Right cardiac atrium (tissue), 5 donors: ENCODE measurements at regions of chrX and their contacts with region 1.

Region 1: DNA sequence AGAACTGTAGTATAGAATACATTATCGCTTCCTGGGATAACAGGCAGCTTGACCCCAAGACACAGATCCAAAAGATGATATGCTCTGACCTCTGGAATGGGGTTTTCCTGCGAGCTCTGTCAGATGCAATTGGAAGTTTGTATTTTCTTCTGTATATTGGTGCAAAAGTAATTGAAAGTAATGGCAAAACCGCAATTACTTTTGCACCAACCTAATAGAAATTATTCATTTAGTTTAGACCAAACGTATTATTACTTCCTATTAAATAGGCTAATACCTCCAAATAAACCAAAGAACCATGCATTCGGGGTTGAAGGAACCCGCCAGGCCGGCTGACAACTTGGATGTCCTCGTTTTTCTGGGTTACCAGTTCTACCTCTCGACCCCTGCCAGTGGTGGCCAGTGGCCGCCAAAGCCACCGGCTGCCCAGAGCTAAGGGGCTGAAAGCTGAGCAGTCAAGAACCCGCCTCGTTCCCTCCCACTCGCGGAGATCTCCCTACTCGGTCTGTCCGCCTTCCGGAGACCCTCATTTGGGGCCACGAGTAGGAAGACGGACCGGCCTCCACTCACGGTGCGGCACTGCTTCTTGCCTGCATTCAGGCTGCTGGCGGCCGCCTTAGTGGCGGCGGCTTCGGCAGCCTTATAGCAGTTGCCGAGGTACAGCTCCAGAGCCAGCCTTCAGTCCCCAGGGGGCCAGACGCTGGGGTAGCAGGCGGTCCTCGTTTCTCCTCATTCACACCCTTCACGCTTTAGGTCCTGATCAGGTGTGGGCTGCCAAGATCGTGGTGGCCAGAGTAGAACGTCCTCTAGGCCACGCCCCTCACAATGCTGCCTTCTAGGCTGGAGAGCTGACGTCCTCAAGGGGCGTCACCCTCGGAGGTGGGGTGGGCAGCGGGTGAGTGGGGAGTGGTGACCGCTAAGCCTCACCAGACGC is 121.9 kb downstream of the RBMX2 start:
- DNase-seq: peak; percentile 51 to 79 (median 63)
- ATAC-seq: peak; percentile 81 to 82
- H3K4me3 ChIP-seq: peak overlapping the region; percentile 40
- H3K27ac ChIP-seq: no peak overlapping the region
- H3K4me1 ChIP-seq: no peaks in the 10 kb centered on the region
- H3K27me3 ChIP-seq: no peaks in the 10 kb centered on the region

Region 2: DNA sequence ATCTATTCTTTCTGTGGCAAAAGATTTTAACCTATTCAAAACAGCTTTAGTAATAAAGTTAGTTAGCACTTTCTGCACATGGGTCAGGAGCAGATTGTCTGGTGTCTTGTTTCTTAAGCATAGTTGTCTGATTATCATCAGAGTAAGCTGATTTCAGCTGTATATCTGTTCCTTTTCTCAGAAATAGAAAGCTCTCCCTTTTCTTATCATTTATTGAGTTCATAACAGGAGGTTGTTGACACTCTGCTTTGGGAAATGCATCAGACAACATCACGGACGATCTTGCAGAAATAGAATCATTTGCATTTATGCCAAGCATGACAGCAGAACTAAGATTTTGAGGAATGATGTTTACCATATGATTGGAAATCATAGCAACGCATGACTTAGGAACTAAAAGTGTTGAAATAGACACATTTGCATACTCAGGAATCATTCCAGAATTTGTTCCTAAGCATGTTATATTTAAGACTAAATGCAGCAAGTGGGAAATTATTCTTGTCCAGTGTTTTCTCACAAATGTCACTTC is 55.3 kb before region 1 on chrX:
- intact Hi-C with region 1: loop called in 1 of 4 experiments (anchors 10 kb)
- DNase-seq: no peak
- ATAC-seq: no peak
- H3K4me3 ChIP-seq: no peak overlapping the region
- H3K27ac ChIP-seq: no peak overlapping the region
- H3K4me1 ChIP-seq: no peaks in the 10 kb centered on the region
- H3K27me3 ChIP-seq: no peaks in the 10 kb centered on the region